ENCODE measurements at regions of chr15 and their contacts with region 1.

Region 1: DNA sequence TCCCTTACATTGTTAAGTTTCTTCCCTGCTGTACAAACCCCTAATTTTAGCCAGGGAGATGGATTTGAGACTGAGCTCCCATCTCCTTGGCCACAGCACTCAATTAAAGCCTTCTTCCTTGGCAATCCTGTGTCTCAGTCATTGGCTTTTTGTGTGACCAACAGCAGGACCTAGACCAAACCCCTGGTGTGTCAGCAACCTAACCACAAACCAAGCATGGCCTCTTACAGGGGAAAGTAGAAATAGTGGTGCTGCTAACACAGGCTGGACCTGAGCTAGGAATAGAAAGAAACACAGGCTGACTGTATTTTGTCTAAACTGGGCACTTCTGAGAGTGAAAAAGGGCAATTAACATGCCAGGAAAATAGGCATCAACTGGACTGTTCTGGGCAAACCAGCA is 37.9 kb downstream of the PPCDC start:
- DNase-seq: no peak
- ATAC-seq: no peak
- H3K4me3 ChIP-seq: no peak overlapping the region
- H3K27ac ChIP-seq: no peak overlapping the region
- H3K4me1 ChIP-seq: peaks cover 15% of the 10 kb centered on the region
- H3K27me3 ChIP-seq: no peaks in the 10 kb centered on the region
- CTCF ChIP-seq: no peak
- POLR2A ChIP-seq: no peak

Region 2: DNA sequence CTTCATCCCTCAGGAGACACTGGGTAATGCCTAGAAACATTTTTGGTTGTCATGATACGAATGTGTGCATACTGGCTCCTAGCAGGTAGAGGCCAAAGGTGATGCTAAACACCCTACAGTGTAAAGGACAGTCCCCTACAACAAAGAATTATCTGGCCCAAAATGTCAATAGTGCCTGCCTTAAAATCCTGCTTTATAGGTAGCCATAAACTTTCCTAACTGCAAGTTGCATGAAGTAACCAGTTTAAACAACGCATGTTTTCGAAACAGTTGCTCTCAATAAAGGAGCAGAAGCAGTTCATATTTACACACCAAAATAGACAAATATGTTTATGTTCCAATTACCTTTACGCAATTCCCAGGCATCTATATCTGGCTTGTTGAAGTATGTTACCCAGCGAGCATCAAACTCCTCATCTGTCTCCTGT is 132.5 kb before region 1 on chr15:
- intact Hi-C with region 1: no loop called
- DNase-seq: no peak
- ATAC-seq: no peak
- H3K4me3 ChIP-seq: no peak overlapping the region
- H3K27ac ChIP-seq: no peak overlapping the region
- H3K4me1 ChIP-seq: peaks cover 4% of the 10 kb centered on the region
- H3K27me3 ChIP-seq: no peaks in the 10 kb centered on the region
- CTCF ChIP-seq: no peak
- POLR2A ChIP-seq: no peak

Region 3: DNA sequence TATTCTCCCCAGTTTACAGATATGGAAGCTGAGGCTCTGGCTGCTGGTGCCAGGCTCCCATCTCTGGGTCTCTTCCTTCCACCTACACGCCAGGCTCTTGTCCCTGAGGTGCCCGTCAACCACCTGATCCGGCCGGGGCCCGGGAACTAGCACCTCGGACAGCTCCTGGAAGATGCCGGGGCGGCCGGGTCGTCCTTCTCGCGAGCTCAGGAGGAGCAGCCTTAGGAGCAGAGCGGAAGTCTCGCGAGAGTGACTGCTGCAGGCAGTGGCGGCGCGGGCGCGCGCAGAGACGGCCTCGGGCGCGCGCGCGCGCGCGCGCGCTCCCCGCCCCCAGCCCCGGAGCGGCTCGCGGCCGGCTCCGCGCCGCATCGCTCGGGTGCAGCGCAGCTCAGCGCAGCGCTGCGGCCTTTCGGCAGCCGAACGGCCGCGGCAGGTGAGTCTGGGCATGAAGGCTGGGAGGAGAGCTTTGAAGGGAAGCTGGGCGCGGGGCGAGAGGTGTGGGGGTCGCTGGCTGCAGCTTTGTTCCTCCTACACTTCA is 66.0 kb before region 1 on chr15 and contains the start of gene SCAMP5:
- intact Hi-C with region 1: no loop called
- DNase-seq: peak; percentile 97 to 99 (median 98)
- ATAC-seq: peak; percentile 91
- H3K4me3 ChIP-seq: peak within 1 kb of the TSS; percentile 19 to 33
- H3K27ac ChIP-seq: peak within 1 kb of the TSS; percentile 55 to 78 (median 74)
- H3K4me1 ChIP-seq: peaks cover 52% of the 10 kb centered on the region
- H3K27me3 ChIP-seq: no peaks in the 10 kb centered on the region
- CTCF ChIP-seq: peak in 1 of 7 experiments; percentile 5
- POLR2A ChIP-seq: peak in 2 of 3 donors; percentile 68 to 71
- total RNA-seq, gene SCAMP5: 21.1 to 30.4 TPM

Region 4: GRCh38 chr15:75104804-75105535 is 43.7 kb after region 1 on chr15:
- intact Hi-C with region 1: loop called (anchors 5 kb)
- DNase-seq: peak in 1 of 4 donors; percentile 64
- ATAC-seq: peak; percentile 56
- H3K4me3 ChIP-seq: no peak overlapping the region
- H3K27ac ChIP-seq: peak overlapping the region in 1 of 4 donors; percentile 38
- H3K4me1 ChIP-seq: no peaks in the 10 kb centered on the region
- H3K27me3 ChIP-seq: no peaks in the 10 kb centered on the region
- CTCF ChIP-seq: no peak
- POLR2A ChIP-seq: no peak

Measured in body of pancreas (tissue), 4 donors.